A549 (cell line): ENCODE measurements at regions of chr17 and their contacts with region 1.

Region 1: GRCh38 chr17:62916681-62917571 is 49.1 kb upstream of the TANC2 start:
- DNase-seq: no peak
- ATAC-seq: no peak
- H3K4me3 ChIP-seq: no peak overlapping the region
- H3K27ac ChIP-seq: no peak overlapping the region
- H3K4me1 ChIP-seq: 0 out of 3 replicates have a peak, but pooled peaks cover 4% of the 10 kb centered on the region
- CTCF ChIP-seq: no peak
- EP300 ChIP-seq: no peak
- POLR2A ChIP-seq: no peak
- RAD21 ChIP-seq: no peak

Region 2: DNA sequence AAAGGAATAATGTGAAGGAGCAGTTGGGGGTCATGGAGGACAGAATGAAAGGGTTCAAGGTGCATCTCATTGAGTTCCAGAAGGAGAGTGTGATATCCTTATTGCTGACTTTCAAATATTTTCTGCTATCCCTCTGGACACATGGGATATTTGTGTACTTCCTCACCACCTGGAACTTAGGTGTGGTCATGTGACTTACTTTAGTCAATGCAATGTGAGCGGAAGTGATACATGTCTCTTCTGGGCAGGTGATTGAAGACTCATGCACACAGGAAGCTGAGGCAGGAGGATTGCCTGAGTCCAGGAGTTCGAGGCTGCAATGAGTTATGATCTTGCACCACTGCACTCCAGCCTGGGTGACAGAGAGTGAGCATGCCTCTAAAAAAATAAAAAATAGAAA is 12.4 kb after region 1 on chr17:
- CTCF ChIA-PET with region 1: interaction called, 12 read pairs
- POLR2A ChIA-PET with region 1: no interaction called
- DNase-seq: no peak
- ATAC-seq: no peak
- H3K4me3 ChIP-seq: no peak overlapping the region
- H3K27ac ChIP-seq: no peak overlapping the region
- H3K4me1 ChIP-seq: no peaks in the 10 kb centered on the region
- CTCF ChIP-seq: no peak
- EP300 ChIP-seq: no peak
- POLR2A ChIP-seq: no peak
- RAD21 ChIP-seq: no peak

Region 3: DNA sequence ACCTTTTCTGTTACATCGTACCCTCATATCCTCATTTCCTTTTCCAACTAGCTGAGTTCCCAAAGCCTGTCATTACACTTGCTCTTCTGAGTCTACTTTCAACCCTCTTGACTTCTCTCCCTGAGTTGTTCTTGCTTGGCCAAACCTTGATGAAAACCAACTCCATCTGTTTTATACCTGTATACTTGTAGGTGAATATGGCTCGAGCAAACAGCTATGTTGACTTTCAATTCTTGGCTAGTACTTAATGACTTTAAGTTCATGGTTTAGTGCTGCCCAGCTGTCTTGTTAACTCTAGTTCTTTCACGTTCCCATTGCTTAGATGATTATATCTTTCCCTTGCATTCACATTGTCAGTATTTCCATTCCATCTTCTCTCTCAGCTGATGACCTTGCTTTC is 63.9 kb after region 1 on chr17:
- CTCF ChIA-PET with region 1: no interaction called
- POLR2A ChIA-PET with region 1: no interaction called
- DNase-seq: no peak
- ATAC-seq: no peak
- H3K4me3 ChIP-seq: no peak overlapping the region
- H3K27ac ChIP-seq: no peak overlapping the region
- H3K4me1 ChIP-seq: no peaks in the 10 kb centered on the region
- CTCF ChIP-seq: no peak
- EP300 ChIP-seq: no peak
- POLR2A ChIP-seq: no peak
- RAD21 ChIP-seq: no peak